Activated naive CD4-positive, alpha-beta T cell treated with anti-CD3 and anti-CD28 coated beads for 36 hours (primary cell): ENCODE measurements at regions of chr19 and their contacts with region 1.

Region 1: GRCh38 chr19:39187559-39187957 is 9.2 kb upstream of the NCCRP1 start:
- DNase-seq: no peak
- H3K4me3 Mint-ChIP-seq: no peak overlapping the region
- H3K27ac Mint-ChIP-seq: no peak overlapping the region
- H3K4me1 Mint-ChIP-seq: no peaks in the 10 kb centered on the region
- H3K27me3 Mint-ChIP-seq: peaks cover 10% of the 10 kb centered on the region

Region 2: DNA sequence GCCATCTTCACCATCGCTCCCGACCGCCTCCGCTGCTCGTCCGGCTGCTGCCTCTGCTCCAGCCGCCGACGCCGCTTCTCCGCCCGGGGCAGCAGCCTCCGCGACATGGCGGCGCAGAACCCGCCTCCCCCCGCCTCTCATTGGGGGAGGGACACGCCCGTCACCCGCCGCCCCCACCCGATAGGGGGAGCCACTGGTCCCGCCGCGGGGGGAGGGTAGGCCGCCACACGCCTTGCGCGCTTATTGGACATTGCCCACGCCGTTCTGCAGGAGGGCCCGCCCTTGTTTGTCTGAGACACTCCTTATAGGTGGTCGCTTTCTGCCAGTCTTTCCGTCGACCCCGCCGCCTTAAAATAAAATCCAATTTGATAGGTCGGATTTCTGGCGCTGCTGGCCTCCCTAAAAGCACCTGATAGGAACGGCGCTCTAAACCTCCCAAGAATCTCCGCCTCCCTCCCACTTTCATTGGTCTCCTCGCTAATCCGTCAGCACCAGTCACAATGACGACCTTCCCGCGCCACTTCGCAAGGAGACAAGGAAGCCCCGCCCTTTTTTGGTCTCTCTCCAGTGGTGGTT is 337.6 kb before region 1 on chr19 and contains the start of gene HNRNPL:
- CTCF ChIA-PET with region 1: no interaction called
- intact Hi-C with region 1: no loop called
- DNase-seq: peak; percentile 100
- H3K4me3 Mint-ChIP-seq: peak within 1 kb of the TSS; percentile 91
- H3K27ac Mint-ChIP-seq: peak within 1 kb of the TSS; percentile 96
- H3K4me1 Mint-ChIP-seq: peaks cover 50% of the 10 kb centered on the region
- H3K27me3 Mint-ChIP-seq: no peaks in the 10 kb centered on the region
- total RNA-seq, gene HNRNPL: 777 to 829 TPM

Region 3: GRCh38 chr19:39052243-39052746 is 135.3 kb before region 1 on chr19:
- CTCF ChIA-PET with region 1: no interaction called
- intact Hi-C with region 1: loop called (anchors 1 kb)
- DNase-seq: peak; percentile 74
- H3K4me3 Mint-ChIP-seq: no peak overlapping the region
- H3K27ac Mint-ChIP-seq: no peak overlapping the region
- H3K4me1 Mint-ChIP-seq: no peaks in the 10 kb centered on the region
- H3K27me3 Mint-ChIP-seq: peaks cover 2% of the 10 kb centered on the region

Region 4: DNA sequence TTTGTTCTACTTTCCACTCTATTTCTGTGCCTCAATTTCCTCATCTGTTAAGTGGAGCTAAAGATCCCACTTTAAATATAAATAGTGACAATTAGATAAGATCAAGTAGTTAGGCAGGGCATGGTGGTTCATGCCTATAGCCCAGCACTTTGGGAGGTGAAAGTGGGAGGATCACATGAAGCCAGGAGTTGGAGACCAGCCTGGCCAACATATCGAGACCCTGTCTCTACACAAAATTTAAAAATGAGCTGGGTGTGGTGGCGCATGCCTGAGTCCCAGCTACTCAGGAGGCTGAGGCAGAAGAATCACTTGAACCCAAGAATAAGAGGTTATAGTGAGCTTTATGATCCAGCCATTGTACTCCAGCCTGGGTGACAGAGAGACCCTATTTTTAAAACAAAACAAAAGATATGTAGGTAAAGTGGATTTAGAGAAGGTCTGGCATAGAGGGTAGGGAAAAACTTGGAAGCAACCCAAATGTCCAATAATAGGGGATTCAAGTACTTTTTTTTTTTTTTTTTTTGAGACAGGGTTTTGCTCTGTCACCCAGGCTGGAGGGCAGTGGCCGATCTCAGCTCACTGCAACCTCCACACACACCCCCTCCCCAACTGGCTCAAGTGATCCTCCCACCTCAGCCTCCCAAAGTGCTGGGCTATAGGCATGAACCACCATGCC is 67.9 kb before region 1 on chr19:
- CTCF ChIA-PET with region 1: interaction called, 14 read pairs
- intact Hi-C with region 1: loop called (anchors 1 kb)
- DNase-seq: no peak
- H3K4me3 Mint-ChIP-seq: no peak overlapping the region
- H3K27ac Mint-ChIP-seq: no peak overlapping the region
- H3K4me1 Mint-ChIP-seq: peaks cover 7% of the 10 kb centered on the region
- H3K27me3 Mint-ChIP-seq: peaks cover 2% of the 10 kb centered on the region

Region 5: DNA sequence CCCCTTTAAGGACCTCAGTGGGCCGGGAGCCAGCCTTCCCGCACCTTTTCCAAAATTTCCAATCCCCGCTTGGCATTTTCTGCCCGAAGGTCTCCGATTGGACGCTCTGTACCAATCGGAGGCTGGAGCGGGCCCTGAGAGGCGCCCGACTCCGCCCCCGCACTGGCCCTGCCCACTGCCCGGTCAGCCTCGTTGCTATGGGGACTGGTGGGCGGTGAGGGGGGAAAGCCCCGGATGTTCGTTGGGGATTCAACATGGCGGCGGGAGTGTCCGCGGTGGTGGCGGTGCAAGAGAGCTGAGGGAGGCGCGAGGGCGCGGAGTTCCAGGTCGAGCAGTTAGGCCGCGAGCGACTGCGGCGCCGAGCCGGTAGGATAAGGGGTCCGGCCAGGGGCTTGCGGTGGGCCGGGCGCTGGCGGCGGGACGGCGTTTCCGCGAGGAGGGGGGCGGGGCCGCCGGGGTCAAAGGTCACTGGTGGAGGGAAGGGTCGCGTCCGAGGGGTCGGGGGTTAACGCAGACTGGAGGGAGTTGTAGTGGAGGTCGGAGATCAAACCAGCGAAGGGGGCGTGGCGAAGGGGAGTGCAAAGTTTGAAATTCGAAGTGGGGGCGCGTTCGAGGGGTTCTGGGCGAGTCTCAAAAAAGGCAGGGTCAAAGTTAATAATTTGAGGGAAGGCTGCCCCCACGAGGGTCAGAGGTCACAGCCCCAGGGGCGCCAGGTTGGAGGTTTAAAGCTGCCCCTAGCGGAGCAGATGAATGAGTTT is 61.8 kb before region 1 on chr19 and contains the start of gene PAK4:
- CTCF ChIA-PET with region 1: interaction called, 10 read pairs
- intact Hi-C with region 1: loop called (anchors 1 kb)
- DNase-seq: peak; percentile 99
- H3K4me3 Mint-ChIP-seq: peak within 1 kb of the TSS; percentile 92
- H3K27ac Mint-ChIP-seq: peak within 1 kb of the TSS; percentile 92
- H3K4me1 Mint-ChIP-seq: peaks cover 38% of the 10 kb centered on the region
- H3K27me3 Mint-ChIP-seq: peaks cover 2% of the 10 kb centered on the region
- total RNA-seq, gene PAK4: 16.9 to 18.1 TPM

Region 6: DNA sequence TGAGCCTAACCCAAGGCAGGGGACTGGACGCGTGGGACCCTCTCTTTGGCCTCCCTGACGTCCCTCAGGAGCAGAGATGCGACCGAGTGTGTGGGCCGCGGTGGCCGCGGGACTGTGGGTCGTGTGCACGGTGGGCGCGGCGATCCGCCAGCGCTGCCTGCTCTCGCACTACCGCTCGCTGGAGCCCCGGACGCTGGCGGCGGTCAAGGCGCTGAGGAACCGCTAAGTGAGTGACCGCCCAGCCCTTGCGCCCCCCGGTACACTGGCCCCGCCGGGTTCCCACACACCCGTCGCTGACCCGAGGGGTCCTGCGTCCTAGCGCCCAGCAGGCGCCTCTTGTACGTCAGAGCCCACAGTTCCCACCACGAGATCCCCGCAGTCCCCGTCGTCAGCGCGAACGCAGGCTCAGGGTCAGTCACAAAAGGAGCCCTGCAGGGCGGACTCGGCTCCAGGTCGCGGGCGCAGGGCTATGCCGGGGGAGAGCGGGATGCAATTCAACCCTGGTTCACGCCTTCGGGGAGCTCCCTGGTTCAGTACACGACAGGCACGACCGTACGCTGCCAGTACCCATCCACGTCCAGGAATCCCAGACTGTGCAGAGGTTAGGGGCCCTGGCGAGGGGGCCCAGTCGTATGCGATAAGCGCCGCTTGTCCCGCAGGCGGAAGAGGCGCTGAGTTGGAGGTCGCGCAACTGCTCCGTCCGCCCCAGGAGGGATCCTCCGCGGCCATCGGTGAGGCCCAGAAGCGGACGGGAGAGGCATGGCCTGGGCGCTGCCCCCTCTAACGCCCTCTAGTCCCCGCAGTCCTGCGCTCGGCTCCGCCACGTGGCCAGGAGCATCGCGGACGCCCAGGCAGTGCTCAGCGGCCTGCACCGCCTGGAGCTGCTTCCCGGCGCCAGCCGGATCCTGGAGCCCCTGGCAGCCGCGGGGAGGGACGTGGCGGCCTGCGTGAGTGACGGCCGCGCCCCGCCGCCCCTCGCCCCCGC is 77.0 kb after region 1 on chr19:
- CTCF ChIA-PET with region 1: no interaction called
- intact Hi-C with region 1: no loop called
- DNase-seq: no peak
- H3K4me3 Mint-ChIP-seq: no peak overlapping the region
- H3K27ac Mint-ChIP-seq: no peak overlapping the region
- H3K4me1 Mint-ChIP-seq: peaks cover 13% of the 10 kb centered on the region
- H3K27me3 Mint-ChIP-seq: peaks cover 29% of the 10 kb centered on the region